Activated CD4-positive, alpha-beta T cell treated with anti-CD3 and anti-CD28 coated beads, Interleukin-2, amount 10 ng/mL, durations not matched to agents 7 days and 5 days (primary cell): ENCODE measurements at regions of chr2 and their contacts with region 1.

Region 1: GRCh38 chr2:64609227-64609941 is 44.3 kb downstream of the SERTAD2 start:
- DNase-seq: peak; percentile 60
- H3K4me3 Mint-ChIP-seq: peak overlapping the region; percentile 69
- H3K27ac Mint-ChIP-seq: peak overlapping the region; percentile 81
- H3K4me1 Mint-ChIP-seq: peaks cover 25% of the 10 kb centered on the region
- H3K27me3 Mint-ChIP-seq: peaks cover 17% of the 10 kb centered on the region

Region 2: GRCh38 chr2:64586883-64587481 is 22.4 kb before region 1 on chr2:
- CTCF ChIA-PET with region 1: interaction called, 16 read pairs
- POLR2A ChIA-PET with region 1: no interaction called
- DNase-seq: no peak
- H3K4me3 Mint-ChIP-seq: no peak overlapping the region
- H3K27ac Mint-ChIP-seq: no peak overlapping the region
- H3K4me1 Mint-ChIP-seq: peaks cover 3% of the 10 kb centered on the region
- H3K27me3 Mint-ChIP-seq: no peaks in the 10 kb centered on the region

Region 3: DNA sequence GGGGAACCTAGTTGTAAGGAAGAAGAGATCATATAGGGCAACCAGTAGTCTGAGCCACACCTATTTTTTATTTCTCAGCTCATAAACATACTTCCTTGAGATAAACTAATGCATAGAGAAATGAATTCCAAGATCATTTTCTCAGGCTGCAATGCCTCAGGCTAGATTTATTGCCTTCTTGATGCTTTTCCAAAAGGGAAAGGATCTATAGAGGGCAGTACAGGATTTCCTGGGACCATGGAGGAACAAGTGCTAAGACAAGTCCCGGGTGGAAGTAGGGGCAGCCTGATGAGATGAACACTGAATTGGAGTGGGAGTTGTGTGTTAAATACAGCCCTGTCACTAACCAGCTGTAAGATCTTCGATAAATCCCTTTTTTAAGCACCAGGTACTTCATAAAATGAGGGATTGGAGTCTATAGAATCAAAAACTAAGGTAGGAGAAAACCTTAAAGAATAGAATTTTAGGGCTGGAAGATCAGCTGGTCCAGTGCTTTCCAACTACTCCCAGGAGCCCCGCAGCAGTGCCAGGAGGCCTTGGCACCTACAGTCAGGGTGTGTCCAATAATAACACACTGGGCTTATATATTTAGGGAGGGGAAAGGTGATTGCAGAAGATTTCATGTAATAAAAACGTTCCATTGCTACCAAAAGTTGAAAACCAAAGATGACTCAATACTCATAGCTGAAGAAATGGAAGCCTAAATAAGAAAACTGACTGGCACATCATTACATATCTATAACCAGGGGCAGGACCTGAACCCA is 13.8 kb before region 1 on chr2:
- CTCF ChIA-PET with region 1: interaction called, 23 read pairs
- POLR2A ChIA-PET with region 1: no interaction called
- DNase-seq: no peak
- H3K4me3 Mint-ChIP-seq: no peak overlapping the region
- H3K27ac Mint-ChIP-seq: no peak overlapping the region
- H3K4me1 Mint-ChIP-seq: peaks cover 7% of the 10 kb centered on the region
- H3K27me3 Mint-ChIP-seq: no peaks in the 10 kb centered on the region

Region 4: DNA sequence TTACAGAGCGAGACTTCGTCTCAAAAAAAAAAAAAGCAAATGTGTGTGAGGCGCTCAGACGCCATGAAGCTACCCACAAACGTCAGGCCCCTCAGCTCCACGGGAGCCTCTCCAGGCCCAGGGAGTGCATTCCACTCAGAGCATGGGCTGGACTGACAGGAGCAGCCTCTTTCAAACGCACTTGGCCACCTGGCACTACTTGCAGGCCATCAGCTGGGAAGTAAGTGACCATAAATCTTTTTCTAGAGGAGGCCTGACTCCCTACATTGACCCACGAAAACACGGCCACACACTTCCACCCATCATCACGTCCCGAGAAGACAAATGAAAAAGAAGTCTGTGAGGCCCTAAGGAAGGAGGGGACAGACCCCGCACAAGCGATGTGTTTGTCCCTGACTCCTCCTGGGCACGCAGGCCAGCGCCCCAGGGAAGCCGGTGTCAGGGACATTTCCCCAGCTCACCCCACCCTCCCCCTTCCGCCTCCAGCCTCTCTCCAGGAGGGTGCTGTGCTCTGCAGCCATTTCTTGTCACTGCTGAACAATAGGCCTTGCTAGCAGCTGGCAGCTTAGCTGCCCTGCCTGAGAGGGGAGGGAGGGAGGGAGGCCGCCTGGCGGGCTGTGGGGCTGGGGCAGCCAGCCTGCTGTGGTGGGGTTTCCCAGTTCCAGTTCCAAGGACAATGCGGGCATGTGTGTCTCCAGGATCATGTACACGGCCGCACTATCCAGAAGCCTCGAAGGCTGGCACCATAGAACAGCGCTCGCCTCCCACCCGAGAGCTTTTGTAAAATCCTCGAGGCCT is 17.8 kb after region 1 on chr2:
- CTCF ChIA-PET with region 1: interaction called, 12 read pairs
- POLR2A ChIA-PET with region 1: interaction called, 3 read pairs
- DNase-seq: no peak
- H3K4me3 Mint-ChIP-seq: no peak overlapping the region
- H3K27ac Mint-ChIP-seq: no peak overlapping the region
- H3K4me1 Mint-ChIP-seq: peaks cover 3% of the 10 kb centered on the region
- H3K27me3 Mint-ChIP-seq: no peaks in the 10 kb centered on the region

Region 5: DNA sequence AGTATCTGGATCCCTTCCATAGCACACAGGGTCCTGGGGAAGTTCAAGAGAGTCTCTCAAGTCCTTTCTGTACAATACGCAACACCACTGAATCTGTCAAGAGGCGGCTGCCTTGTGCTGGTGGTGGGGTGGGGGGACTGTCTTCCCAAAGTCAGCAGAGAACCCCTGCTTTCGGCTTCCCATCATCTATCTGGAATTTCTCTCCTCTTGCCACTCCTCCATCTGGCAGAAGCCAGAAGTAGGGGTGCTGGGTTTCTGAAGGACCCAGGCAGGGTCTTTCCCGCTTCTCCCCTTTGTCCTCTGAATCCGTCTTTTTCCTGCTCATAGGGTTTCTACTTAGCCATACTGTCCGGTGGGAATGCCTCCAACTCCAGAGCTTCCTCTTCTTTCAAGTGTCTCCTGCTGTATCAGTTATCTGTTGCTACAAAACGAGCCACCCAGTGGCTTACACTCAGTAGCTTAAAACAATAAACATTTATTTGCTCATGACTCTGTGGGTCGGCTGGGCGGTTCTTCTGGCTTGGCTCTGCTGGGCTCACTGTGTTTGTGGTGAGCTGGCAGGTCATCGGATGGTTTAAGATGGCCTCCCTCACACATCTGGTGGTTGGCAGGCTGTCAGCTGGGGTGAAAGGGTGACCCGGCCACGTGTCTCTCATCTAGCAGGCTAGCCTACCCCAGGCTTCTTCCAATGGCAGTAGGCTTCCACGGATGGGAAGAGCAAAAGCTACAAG is 257.2 kb after region 1 on chr2:
- CTCF ChIA-PET with region 1: interaction called, 19 read pairs
- POLR2A ChIA-PET with region 1: no interaction called
- DNase-seq: no peak
- H3K4me3 Mint-ChIP-seq: no peak overlapping the region
- H3K27ac Mint-ChIP-seq: no peak overlapping the region
- H3K4me1 Mint-ChIP-seq: peaks cover 3% of the 10 kb centered on the region
- H3K27me3 Mint-ChIP-seq: peaks cover 8% of the 10 kb centered on the region